ENCODE measurements at regions of chr14 and their contacts with region 1.

Region 1: DNA sequence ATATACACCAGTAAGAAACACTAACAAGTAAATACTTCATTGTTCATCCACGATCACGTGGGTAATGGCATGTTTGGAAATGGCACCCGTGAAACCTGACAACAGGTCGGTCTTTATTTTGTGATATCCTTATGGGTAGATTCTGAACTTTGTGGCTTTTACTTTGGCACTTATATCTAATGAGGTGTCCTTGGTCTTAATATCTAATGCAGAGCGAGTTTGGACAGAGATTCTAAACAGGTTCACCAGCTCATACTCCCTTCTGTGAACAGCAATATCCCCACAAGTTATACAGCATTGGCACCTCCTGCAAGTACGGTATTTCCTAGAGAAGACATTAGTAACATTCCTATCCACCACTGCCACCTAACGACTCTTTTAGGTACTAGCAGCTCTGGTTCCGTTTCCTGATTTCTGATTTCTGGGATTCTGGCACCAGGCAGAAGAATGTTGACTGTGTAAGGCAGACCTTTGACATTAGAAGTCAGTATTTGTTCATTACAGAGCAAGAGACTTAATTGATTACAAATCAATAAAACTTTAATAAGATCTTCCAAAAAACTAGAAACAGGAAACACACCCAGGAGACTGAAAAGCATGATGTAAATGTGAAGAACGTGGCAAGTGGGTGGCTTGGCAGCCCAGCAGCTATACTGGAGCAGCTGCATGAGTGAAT is 2.4 kb downstream of the ANG start:
- DNase-seq: peak in 1 of 2 donors; percentile 81
- H3K4me3 ChIP-seq: no peak overlapping the region
- H3K27ac ChIP-seq: no peak overlapping the region
- H3K4me1 ChIP-seq: peaks cover 3 to 13% of the 10 kb centered on the region in 2 donors
- H3K27me3 ChIP-seq: no peaks in the 10 kb centered on the region
- CTCF ChIP-seq: peak; percentile 75 to 85 (median 77)

Region 2: GRCh38 chr14:20376071-20376588 is 314.9 kb before region 1 on chr14:
- intact Hi-C with region 1: no loop called
- DNase-seq: no peak
- H3K4me3 ChIP-seq: no peak overlapping the region
- H3K27ac ChIP-seq: no peak overlapping the region
- H3K4me1 ChIP-seq: no peaks in the 10 kb centered on the region
- H3K27me3 ChIP-seq: no peaks in the 10 kb centered on the region
- CTCF ChIP-seq: no peak

Region 3: DNA sequence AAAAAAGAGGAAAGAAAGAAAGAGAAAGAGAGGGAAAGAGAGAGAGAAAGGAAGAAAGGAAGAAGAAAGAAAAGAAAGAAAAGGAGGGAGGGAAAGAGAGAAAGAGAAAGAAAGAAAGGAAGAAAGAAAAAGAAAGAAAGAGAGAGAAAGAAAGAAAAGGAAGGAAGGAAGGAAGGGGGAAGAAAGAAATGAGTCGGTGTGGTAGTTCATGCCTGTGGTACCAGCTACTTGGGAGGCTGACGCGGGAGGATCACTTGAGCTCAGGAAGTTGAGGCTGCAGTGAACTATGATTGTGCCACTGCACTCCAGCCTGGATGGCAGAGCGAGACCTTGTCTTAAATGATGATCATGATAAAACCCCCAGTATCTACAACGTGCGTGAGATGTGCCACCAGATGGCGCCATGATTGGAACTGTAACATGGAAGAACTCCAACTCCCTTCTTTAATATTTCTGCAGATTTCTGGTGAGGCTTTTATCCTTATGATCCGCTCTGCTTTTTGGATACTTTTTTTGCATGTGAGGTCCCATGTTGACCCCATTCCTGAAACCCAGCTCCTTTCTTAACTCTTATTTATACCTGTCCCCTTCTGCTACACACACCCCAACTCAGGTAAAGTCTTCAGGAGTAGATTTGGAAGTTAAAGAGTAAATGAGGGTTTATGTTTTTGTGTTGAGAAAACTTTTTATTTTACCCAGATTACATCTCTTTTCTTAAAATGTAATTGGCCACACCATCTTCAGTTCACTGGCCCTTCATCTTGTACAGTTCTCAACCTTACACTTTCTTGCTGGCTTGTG is 160.0 kb before region 1 on chr14:
- intact Hi-C with region 1: loop called (anchors 1 kb)
- DNase-seq: peak; percentile 20 to 83
- H3K4me3 ChIP-seq: no peak overlapping the region
- H3K27ac ChIP-seq: no peak overlapping the region
- H3K4me1 ChIP-seq: no peaks in the 10 kb centered on the region
- H3K27me3 ChIP-seq: no peaks in the 10 kb centered on the region
- CTCF ChIP-seq: peak in 2 of 3 experiments; percentile 47 to 67

Region 4: DNA sequence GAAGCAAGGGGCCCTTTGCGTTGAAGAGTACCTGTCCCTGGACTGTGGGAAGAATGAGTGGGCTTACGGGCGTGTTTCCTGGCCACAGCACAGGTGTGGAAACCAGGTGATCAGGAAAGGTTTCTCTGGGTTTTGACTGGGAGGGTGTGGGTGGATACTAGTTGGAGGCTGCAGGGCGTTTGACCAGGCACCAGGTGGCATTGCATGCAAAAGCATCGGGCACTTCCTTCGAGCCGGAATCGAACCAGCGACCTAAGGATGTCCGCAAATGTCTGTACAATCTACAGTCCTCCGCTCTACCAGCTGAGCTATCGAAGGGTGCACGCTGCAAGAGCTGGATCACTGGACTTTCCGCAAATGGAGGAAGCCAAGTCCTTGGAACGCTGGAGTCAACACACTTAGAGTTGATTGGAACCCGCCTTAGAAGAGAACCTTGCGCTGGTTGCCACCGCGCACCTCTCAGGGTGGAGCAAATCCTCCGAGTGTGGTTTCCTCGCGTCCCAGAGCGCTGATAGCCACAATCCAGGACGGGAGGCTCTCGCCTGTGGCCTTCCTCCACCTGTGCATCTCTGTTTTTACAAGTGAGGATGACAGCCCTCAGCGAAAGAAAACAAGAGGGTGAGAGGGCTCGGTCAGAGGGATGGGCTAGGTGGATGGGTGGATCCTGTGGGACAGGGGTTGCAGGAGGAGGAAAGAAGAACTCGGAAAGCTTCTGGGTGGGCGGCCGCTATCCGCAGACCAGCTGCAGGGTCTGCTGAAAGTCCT is 27.8 kb before region 1 on chr14:
- intact Hi-C with region 1: loop called (anchors 2 kb)
- DNase-seq: peak in 1 of 2 donors; percentile 76
- H3K4me3 ChIP-seq: peak overlapping the region; percentile 41 to 56
- H3K27ac ChIP-seq: no peak overlapping the region
- H3K4me1 ChIP-seq: peaks cover 0 to 8% of the 10 kb centered on the region in 2 donors
- H3K27me3 ChIP-seq: peaks cover 5% of the 10 kb centered on the region
- CTCF ChIP-seq: peak; percentile 24 to 47 (median 35)

Region 5: DNA sequence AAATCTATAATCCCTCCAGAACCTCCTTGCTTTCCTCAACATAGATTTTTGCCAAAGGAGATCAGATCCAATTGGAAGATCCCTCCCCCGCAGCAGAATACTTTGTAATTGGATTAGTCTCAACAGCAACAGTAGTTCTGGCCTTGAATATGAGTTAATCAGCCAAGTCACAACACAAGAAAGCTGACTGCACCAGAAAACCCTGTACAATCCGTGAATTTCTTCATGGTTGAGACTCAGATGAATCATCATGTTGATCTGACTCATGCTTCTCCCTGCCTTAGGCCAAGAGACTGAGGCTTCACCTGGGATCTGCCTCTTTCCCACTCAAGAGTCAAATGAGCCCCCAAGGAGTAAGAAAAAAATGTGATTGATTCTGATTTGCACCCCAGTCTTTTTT is 295.8 kb after region 1 on chr14:
- intact Hi-C with region 1: no loop called
- DNase-seq: peak in 1 of 2 donors; percentile 80
- H3K4me3 ChIP-seq: no peak overlapping the region
- H3K27ac ChIP-seq: peak overlapping the region; percentile 36 to 75
- H3K4me1 ChIP-seq: peaks cover 27 to 35% of the 10 kb centered on the region in 2 donors
- H3K27me3 ChIP-seq: no peaks in the 10 kb centered on the region
- CTCF ChIP-seq: no peak